Activated CD4-positive, alpha-beta T cell treated with anti-CD3 and anti-CD28 coated beads for 36 hours (primary cell): ENCODE measurements at regions of chr19 and their contacts with region 1.

Region 1: GRCh38 chr19:4669723-4670480 is at the start of gene MYDGF:
- DNase-seq: peak; percentile 97
- ATAC-seq: peak; percentile 99
- H3K4me3 Mint-ChIP-seq: peak within 1 kb of the TSS; percentile 85
- H3K27ac Mint-ChIP-seq: peak within 1 kb of the TSS; percentile 75
- H3K4me1 Mint-ChIP-seq: peaks cover 18% of the 10 kb centered on the region
- H3K27me3 Mint-ChIP-seq: no peaks in the 10 kb centered on the region
- total RNA-seq, gene MYDGF: 34.7 to 53.8 TPM

Region 2: DNA sequence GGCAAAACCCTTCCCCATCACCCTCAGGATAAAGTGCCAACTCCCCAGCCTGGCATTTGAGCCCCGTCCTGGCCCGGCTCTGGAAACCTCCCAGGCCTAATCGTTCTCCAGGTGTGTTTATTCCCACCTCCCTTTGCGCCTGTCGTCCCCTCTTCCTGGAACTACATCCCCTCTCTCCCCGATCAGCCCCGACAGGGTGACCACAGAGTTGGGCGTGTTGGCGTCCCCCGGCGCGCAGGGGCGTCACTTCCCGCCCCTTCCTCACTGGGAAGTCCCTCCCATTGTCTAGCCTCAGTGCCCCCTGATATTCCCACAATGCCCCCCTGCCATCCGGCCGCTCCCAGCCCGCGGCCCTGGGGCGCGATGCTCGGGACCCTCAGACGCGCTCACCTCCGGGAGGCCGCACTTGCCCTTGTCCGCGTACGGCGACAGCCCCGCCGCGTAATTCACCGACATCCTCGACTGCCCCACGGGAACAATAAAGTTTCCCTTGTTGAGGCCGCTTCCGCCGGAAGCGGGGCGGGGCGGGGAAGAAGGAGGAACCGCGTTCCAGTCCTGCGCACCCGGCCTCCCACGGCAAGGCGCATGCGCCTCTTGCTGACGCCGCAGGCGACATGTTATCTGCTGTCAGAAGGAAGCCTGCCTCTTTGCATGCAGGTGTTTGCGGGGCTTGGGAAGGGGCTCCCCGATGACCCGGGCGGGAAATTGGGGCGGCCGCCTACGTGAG is 487.7 kb before region 1 on chr19 and contains the starts of genes ANKRD24 and SIRT6:
- CTCF ChIA-PET with region 1: no interaction called
- POLR2A ChIA-PET with region 1: no interaction called
- intact Hi-C with region 1: no loop called
- DNase-seq: peak; percentile 98
- ATAC-seq: peak; percentile 84
- H3K4me3 Mint-ChIP-seq: peak within 1 kb of the TSS; percentile 92
- H3K27ac Mint-ChIP-seq: peak within 1 kb of the TSS; percentile 93
- H3K4me1 Mint-ChIP-seq: peaks cover 30% of the 10 kb centered on the region
- H3K27me3 Mint-ChIP-seq: no peaks in the 10 kb centered on the region
- total RNA-seq, gene ANKRD24: 1.1 to 1.3 TPM
- total RNA-seq, gene SIRT6: 26.2 to 29.4 TPM

Region 3: DNA sequence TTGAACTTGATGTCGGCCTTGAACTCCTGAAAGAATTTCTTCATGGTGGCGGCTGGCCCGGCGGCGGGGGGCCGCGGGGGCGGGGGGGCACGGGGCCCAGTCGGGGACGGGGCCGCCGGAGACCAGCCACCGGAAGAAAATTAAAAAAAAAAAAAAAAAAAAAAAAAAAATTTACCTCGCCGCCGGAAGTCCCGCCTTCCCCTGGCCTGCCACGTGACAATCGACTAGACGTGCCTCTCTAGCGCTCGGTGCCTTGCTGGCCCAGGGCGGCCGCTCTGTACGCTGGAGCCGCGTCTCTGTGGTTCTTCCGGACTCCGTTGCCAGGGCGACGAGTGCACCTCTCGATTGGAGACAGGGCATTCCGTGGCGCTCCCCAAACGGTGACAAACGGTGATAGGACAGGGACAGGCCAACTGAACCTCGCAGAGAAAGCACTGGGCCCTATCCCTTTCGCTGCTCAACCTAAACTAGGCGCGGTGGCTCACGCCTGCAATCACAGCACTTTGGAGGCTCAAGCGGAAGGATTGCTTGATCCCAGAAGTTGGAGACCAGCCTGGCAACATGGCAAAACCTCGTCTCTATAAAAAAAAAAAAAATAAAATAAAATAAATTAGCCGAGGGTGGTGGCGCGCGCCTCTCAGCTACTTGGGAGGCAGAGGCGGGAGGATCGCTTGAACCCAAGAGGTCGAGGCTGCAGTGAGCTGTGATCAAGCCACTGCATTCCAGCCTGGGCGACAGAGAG is 212.1 kb before region 1 on chr19 and contains the start of gene UBXN6:
- CTCF ChIA-PET with region 1: no interaction called
- POLR2A ChIA-PET with region 1: no interaction called
- intact Hi-C with region 1: loop called in 1 of 2 experiments (anchors 1 kb)
- DNase-seq: peak; percentile 99
- ATAC-seq: peak; percentile 93
- H3K4me3 Mint-ChIP-seq: peak within 1 kb of the TSS; percentile 86
- H3K27ac Mint-ChIP-seq: peak within 1 kb of the TSS; percentile 86
- H3K4me1 Mint-ChIP-seq: peaks cover 19% of the 10 kb centered on the region
- H3K27me3 Mint-ChIP-seq: no peaks in the 10 kb centered on the region
- total RNA-seq, gene UBXN6: 32.9 to 38.4 TPM

Region 4: DNA sequence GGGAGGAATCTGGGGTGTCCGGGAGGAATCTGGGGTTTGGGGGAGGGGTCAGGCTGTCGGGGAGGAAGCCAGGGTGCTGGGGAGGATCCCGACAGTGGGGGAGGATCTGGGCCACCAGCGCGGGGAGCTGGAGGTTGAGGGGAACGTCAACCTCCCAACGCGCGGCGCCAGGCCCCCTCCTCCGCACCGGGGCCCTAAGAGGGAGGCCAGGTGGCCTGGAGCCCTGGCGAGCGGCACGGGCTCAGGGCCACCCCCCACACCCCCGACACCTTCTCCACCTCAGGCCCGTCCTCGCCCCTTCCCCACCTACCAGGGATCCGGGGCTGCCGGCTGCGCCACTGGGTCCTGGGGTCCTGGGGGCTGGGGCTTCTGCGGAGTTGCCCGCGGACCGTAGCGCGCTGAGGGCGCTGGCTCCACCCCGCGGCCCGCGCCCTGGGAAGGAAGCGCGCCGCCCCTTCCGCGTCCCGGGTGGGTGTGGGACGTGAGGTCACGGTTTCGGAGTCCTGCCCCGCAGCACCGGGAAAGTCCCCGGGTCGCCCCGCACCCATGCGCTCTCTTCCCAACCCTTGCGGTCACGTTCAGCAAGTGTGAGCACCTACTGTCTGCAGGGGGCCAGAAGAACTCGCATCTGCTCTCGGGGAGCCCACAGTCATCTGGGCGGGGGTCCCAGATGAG is 161.5 kb after region 1 on chr19 and contains the start of gene TICAM1:
- CTCF ChIA-PET with region 1: no interaction called
- POLR2A ChIA-PET with region 1: no interaction called
- intact Hi-C with region 1: loop called in 1 of 2 experiments (anchors 1 kb)
- DNase-seq: peak; percentile 87
- ATAC-seq: peak; percentile 91
- H3K4me3 Mint-ChIP-seq: peak within 1 kb of the TSS; percentile 85
- H3K27ac Mint-ChIP-seq: peak within 1 kb of the TSS; percentile 87
- H3K4me1 Mint-ChIP-seq: peaks cover 22% of the 10 kb centered on the region
- H3K27me3 Mint-ChIP-seq: no peaks in the 10 kb centered on the region
- total RNA-seq, gene TICAM1: 23.4 to 24.1 TPM

Region 5: DNA sequence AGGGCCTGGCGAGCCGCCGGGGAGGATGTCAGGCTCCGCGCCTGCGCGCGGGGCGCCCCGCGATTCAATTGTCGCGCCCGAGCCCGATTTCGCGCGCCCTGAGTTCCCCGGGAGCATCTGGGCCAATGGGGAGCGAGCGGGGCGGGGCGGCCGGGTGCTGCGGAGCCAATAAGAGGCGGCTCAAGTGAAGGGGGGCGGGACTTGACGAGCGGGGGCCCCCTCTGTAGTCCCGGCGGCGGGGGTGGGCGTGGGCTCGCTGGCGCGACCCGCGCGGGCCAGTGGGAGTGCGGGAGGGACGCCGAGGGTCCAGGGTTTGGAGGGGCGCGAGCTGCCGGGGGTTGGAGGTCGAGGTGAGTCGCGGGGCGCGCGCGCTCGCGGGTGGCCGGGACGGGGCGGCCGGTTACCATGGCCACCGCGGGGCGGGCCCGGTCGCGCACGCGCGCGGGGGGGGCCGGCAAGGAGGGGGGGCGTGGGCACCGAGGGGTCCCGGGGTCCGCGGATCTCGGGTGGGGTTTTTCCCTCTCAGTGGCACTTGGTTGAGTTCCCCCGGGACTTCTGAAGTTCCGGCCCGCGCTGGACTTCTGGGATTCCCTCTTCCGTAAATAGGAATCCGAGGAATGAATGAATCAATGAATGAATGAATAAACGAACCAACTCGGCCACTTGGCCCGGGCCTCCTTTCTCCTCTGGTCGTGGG is 240.1 kb after region 1 on chr19:
- CTCF ChIA-PET with region 1: no interaction called
- POLR2A ChIA-PET with region 1: no interaction called
- intact Hi-C with region 1: loop called in 1 of 2 experiments (anchors 1 kb)
- DNase-seq: peak; percentile 98
- ATAC-seq: peak; percentile 78
- H3K4me3 Mint-ChIP-seq: peak overlapping the region; percentile 83
- H3K27ac Mint-ChIP-seq: peak overlapping the region; percentile 90
- H3K4me1 Mint-ChIP-seq: peaks cover 42% of the 10 kb centered on the region
- H3K27me3 Mint-ChIP-seq: no peaks in the 10 kb centered on the region

Region 6: DNA sequence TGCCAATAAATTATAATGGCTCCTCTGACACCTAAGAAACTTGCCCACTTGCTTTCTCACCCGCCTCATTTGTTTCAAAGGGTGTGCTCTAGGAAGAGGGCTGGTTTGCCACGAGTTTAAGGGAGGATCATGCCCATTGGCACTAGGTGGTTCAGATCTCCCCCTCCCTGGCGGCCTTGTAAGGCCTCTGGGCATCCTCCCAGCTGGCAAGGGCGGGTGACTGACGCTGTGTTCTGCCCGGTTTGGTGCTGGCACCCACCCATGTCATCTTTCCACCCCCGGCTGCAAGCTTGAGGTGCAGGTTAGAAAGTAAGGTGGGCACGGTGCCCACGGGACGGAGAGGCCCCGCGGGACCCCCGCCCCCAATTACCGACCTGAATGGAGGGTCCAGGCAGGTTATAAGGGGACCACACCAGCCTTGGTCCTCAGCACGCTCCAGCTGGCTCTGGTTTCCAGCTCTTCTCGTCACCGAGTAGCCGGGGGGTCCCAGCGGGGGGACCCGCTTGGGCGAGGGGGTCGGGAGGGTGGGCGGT is 580.3 kb after region 1 on chr19:
- CTCF ChIA-PET with region 1: no interaction called
- POLR2A ChIA-PET with region 1: no interaction called
- intact Hi-C with region 1: no loop called
- DNase-seq: no peak
- ATAC-seq: no peak
- H3K4me3 Mint-ChIP-seq: no peak overlapping the region
- H3K27ac Mint-ChIP-seq: no peak overlapping the region
- H3K4me1 Mint-ChIP-seq: peaks cover 9% of the 10 kb centered on the region
- H3K27me3 Mint-ChIP-seq: peaks cover 4% of the 10 kb centered on the region

Region 7: DNA sequence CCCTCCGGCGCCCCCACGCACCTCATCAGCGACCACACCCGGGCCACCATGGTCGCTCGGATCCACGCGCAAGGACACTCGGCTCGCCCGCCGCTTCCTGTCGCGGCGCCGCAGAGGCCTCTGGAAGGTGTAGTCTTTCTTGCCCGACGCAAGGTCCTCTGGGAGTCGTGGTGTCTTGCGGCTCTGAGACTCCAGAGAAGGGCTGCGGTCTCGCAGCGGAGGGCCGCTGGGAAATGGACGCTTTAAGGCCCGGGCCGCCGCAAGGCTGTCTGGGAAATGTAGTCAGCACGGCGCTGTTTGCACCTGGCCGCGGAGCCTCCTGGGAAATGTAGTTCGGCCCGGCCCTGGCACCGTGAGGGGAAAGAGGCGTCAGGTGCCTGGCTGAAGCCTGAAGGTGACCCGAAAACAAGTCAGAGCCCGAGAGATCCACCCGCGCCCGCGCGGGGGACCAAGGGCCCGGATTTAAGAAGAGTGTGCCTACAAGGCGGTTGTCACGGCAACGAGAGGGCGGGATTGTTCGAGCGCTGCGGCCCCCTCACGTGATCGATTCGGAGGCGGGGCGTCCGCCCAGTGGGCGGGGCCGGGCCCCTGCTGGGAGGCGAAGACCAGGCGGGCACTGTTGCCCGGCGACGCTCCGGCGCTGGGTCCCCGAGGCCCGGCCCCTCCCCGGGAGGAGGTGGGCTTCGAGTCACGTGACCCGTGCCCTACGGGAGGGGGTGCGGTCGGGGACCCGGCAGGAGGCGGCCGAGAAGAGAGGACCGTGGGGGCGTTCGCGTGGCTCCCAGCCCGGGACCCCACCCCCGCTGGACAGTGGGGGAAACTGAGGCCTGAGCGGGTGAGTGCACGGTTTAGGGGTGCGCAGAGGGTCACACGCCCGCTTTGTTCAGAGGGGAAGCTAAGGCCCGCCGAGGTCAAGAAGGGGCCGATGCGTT is 1010.8 kb after region 1 on chr19 and contains the starts of genes HSD11B1L and MICOS13:
- CTCF ChIA-PET with region 1: no interaction called
- POLR2A ChIA-PET with region 1: no interaction called
- intact Hi-C with region 1: loop called in 1 of 2 experiments (anchors 1 kb)
- DNase-seq: peak; percentile 99
- ATAC-seq: peak; percentile 97
- H3K4me3 Mint-ChIP-seq: peak within 1 kb of the TSS; percentile 99
- H3K27ac Mint-ChIP-seq: peak within 1 kb of the TSS; percentile 94
- H3K4me1 Mint-ChIP-seq: peaks cover 20% of the 10 kb centered on the region
- H3K27me3 Mint-ChIP-seq: no peaks in the 10 kb centered on the region
- total RNA-seq, gene HSD11B1L: 2.0 to 3.2 TPM
- total RNA-seq, gene MICOS13: 50.9 to 52.1 TPM